ENCODE measurements at regions of chr14 and their contacts with region 1.

Region 1: GRCh38 chr14:52552063-52552988 is at the starts of genes GPR137C and TXNDC16:
- DNase-seq: peak; percentile 98 to 100 (median 100)
- ATAC-seq: peak; percentile 86 to 91 (median 88)
- H3K4me3 ChIP-seq: peak within 1 kb of the TSS; percentile 86 to 95
- H3K4me3 Mint-ChIP-seq: peak within 1 kb of the TSS; percentile 93 to 96 (median 94)
- H3K27ac ChIP-seq: peak within 1 kb of the TSS; percentile 85
- H3K27ac Mint-ChIP-seq: peak within 1 kb of the TSS; percentile 82 to 94
- H3K4me1 ChIP-seq: peaks cover 14 to 21% of the 10 kb centered on the region in 2 experiments
- H3K4me1 Mint-ChIP-seq: peaks cover 33 to 40% (median 33%) of the 10 kb centered on the region in 3 donors
- H3K27me3 ChIP-seq: no peaks in the 10 kb centered on the region
- H3K27me3 Mint-ChIP-seq: peaks cover 0 to 15% of the 10 kb centered on the region in 2 donors
- total RNA-seq, gene GPR137C: 0.13 to 0.33 (median 0.15) TPM in 3 of 5 donors, not detected in the others
- total RNA-seq, gene TXNDC16: 6.0 to 12.4 (median 9.0) TPM

Region 2: DNA sequence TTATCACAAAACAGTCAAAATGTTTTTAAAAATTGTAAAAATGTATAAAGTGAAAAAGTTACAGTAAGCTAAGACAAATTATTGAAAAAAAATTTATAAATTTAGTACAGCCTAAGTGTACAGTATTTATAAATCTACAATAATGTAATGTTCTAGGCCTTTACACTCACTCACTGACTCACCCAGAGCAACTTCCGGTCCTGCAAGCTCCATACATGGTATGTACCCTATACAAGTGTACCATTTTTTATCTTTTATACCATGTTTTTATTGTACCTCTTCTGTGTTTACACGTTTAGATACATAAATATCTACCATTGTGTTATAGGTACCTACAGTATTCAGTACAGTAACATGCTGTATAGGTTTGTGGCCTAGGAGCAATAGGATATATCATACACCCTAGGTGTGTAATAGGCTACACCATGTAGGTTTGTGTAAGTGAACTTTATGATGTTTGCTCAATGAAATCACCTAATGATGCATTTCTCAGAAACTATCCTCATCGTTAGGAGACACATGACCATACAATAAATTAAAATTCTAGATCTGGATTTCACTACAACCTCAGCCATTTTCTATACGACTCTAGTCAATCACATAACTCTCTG is 66.9 kb before region 1 on chr14:
- CTCF ChIA-PET with region 1: no interaction called
- POLR2A ChIA-PET with region 1: interaction called in 1 of 2 experiments, 11 read pairs
- DNase-seq: no peak
- ATAC-seq: no peak
- H3K4me3 ChIP-seq: no peak overlapping the region
- H3K4me3 Mint-ChIP-seq: no peak overlapping the region
- H3K27ac ChIP-seq: no peak overlapping the region
- H3K27ac Mint-ChIP-seq: no peak overlapping the region
- H3K4me1 ChIP-seq: no peaks in the 10 kb centered on the region
- H3K4me1 Mint-ChIP-seq: peaks cover 0 to 4% (median 0%) of the 10 kb centered on the region in 3 donors
- H3K27me3 ChIP-seq: no peaks in the 10 kb centered on the region
- H3K27me3 Mint-ChIP-seq: no peaks in the 10 kb centered on the region

Region 3: DNA sequence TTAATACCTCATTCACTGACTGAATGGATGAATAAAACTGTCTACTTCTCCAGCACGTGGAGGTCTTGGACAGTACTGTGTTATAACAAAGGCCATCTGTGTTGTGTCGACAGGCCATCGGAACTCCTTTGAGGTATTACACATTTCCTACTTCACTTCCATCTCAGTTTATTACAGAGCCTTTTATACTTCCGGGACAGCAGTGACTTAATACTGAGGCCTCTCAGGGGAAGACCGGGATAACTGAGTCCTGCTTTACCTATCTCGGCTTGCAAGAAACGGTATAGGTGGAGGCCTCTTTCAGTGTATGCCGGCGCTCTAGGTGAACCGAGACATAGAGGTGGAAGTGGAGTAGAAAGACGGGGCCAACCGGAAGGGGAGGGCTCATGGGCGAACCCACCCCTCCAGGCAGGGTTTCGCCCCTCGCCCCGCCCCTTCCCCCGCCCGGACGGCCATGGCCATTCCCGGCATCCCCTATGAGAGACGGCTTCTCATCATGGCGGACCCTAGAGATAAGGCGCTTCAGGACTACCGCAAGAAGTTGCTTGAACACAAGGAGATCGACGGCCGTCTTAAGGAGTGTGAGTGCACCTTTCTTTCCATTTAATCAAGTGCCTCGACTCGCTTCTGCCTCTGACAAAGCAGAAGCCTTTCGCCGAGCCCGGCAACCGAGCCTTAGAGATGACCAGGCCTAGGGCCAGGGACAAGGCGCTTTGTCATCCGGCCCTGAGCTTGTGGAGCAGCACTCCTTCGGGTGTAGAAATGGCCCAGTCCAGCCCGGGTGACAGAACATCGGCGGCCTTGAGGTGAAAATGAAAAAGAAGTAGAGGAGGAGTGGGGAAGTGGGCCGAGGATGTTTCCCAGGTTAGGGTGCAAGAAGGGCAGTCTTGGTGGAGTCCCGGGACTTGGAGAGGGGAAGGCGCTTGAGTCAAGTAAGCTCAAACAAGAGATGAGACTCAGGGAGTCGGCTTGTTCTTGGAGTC is 154.7 kb after region 1 on chr14 and contains the start of gene PSMC6:
- CTCF ChIA-PET with region 1: no interaction called
- POLR2A ChIA-PET with region 1: interaction called, 6 to 11 read pairs
- DNase-seq: peak; percentile 86 to 98 (median 94)
- ATAC-seq: peak; percentile 98 to 99 (median 98)
- H3K4me3 ChIP-seq: peak within 1 kb of the TSS; percentile 87 to 89
- H3K4me3 Mint-ChIP-seq: peak within 1 kb of the TSS; percentile 98 to 100 (median 99)
- H3K27ac ChIP-seq: peak within 1 kb of the TSS; percentile 83
- H3K27ac Mint-ChIP-seq: peak within 1 kb of the TSS; percentile 98 to 99
- H3K4me1 ChIP-seq: peaks cover 12 to 16% of the 10 kb centered on the region in 2 experiments
- H3K4me1 Mint-ChIP-seq: peaks cover 37 to 52% (median 50%) of the 10 kb centered on the region in 3 donors
- H3K27me3 ChIP-seq: no peaks in the 10 kb centered on the region
- H3K27me3 Mint-ChIP-seq: no peaks in the 10 kb centered on the region
- total RNA-seq, gene PSMC6: 71.4 to 103 (median 74.9) TPM